Posterior cingulate gyrus (tissue), 11 donors: ENCODE measurements at regions of chr17 and their contacts with region 1.

Region 1: GRCh38 chr17:82236142-82236981 is 7.5 kb downstream of the SLC16A3 start:
- DNase-seq: peak in 6 of 10 donors; percentile 63 to 95 (median 76)

Region 2: GRCh38 chr17:82292251-82293154 is 56.1 kb after region 1 on chr17:
- intact Hi-C with region 1: loop called (anchors 10 kb)
- DNase-seq: peak; percentile 93 to 100 (median 95)

Region 3: GRCh38 chr17:82320956-82321927 is 84.9 kb after region 1 on chr17:
- intact Hi-C with region 1: loop called (anchors 5 kb)
- DNase-seq: peak in 2 of 10 donors; percentile 36 to 57

Region 4: GRCh38 chr17:82418001-82418986 is 181.9 kb after region 1 on chr17 and contains the starts of genes HEXD and OGFOD3:
- intact Hi-C with region 1: loop called (anchors 10 kb)
- DNase-seq: peak; percentile 59 to 97 (median 74)